Lower leg skin (tissue), 4 donors: ENCODE measurements at regions of chr20 and their contacts with region 1.

Region 1: GRCh38 chr20:48620519-48621254 is 207.1 kb downstream of the PREX1 start:
- DNase-seq: peak; percentile 73 to 95
- H3K4me3 ChIP-seq: no peak overlapping the region
- CTCF ChIP-seq: peak in 1 of 3 donors; percentile 93
- POLR2A ChIP-seq: no peak

Region 2: DNA sequence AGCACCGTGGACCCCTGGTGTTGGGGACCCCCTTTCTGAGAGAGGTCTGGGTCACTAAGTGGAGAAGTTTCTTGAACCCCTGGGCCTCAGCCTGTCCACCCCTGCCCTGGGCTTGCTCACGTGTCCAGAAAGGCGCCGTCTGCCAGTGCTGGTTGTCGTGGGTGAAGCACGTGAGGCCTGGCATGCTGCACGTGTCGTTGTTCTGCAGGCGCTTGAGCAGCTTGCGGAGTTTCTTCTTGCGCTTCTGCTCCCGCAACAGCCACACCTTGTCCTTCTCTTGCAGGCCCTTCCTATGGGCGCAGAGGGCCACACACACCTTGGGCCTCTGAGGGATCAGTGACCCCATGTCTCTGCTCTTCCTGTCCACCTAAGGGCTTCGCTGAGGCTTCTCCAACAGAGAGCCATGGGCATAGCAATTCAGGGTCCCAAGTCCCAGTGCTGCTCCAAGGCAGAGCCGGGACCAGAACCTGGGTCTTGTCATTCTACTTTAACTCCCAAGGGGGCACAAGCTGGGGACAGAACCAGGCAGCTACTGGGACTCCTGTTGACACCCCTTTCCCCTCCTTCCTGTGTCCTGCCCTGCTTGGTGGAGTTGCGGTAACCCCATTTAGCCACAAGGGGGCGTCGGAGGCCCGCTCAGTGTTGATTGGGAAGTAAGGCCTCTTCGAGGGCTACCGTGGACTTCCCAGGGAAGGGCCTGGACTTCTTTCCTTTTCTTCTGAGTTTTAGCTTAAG is 957.2 kb before region 1 on chr20:
- intact Hi-C with region 1: loop called (anchors 5 kb)
- DNase-seq: peak; percentile 74 to 97
- H3K4me3 ChIP-seq: no peak overlapping the region
- CTCF ChIP-seq: peak in 1 of 3 donors; percentile 82
- POLR2A ChIP-seq: no peak

Region 3: GRCh38 chr20:47677635-47678453 is 942.8 kb before region 1 on chr20:
- intact Hi-C with region 1: loop called (anchors 2 kb)
- DNase-seq: no peak
- H3K4me3 ChIP-seq: no peak overlapping the region
- CTCF ChIP-seq: peak in 1 of 3 donors; percentile 26
- POLR2A ChIP-seq: no peak

Region 4: GRCh38 chr20:47784599-47785320 is 835.9 kb before region 1 on chr20:
- intact Hi-C with region 1: loop called (anchors 5 kb)
- DNase-seq: peak in 1 of 2 donors; percentile 87
- H3K4me3 ChIP-seq: peak overlapping the region; percentile 38
- CTCF ChIP-seq: no peak
- POLR2A ChIP-seq: no peak